CD8-positive, alpha-beta memory T cell (primary cell): ENCODE measurements at regions of chr15 and their contacts with region 1.

Region 1: GRCh38 chr15:60325905-60326304 is 71.9 kb downstream of the ANXA2 start:
- DNase-seq: no peak
- H3K4me3 ChIP-seq: no peak overlapping the region
- H3K4me3 Mint-ChIP-seq: no peak overlapping the region
- H3K27ac ChIP-seq: no peak overlapping the region
- H3K27ac Mint-ChIP-seq: no peak overlapping the region
- H3K4me1 ChIP-seq: no peaks in the 10 kb centered on the region
- H3K4me1 Mint-ChIP-seq: peaks cover 0 to 3% (median 0%) of the 10 kb centered on the region in 3 donors
- H3K27me3 ChIP-seq: peaks cover 19% of the 10 kb centered on the region
- H3K27me3 Mint-ChIP-seq: peaks cover 26 to 59% of the 10 kb centered on the region in 2 donors

Region 2: DNA sequence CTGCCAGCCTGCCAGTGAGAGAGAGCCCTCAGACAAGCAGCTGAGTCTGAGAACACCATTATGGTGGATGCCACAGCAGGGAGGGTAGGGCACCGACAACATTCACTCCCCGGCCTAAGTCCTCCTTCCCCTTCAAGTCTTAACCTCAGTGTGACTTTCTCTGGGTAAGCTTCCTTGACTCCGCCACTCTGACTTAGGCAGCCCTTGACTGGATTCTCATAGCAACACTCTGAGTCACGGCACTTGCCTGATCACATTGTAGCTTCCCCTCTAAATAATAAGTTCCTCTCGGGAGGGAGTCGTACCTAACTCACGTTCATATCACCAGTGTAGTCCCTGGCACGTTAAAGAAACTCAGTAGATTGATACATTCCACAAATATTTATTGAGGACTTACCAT is 141.3 kb before region 1 on chr15:
- CTCF ChIA-PET with region 1: no interaction called
- POLR2A ChIA-PET with region 1: no interaction called
- DNase-seq: no peak
- H3K4me3 ChIP-seq: no peak overlapping the region
- H3K4me3 Mint-ChIP-seq: no peak overlapping the region
- H3K27ac ChIP-seq: no peak overlapping the region
- H3K27ac Mint-ChIP-seq: peak overlapping the region in 1 of 8 donors; percentile 3
- H3K4me1 ChIP-seq: no peaks in the 10 kb centered on the region
- H3K4me1 Mint-ChIP-seq: no peaks in the 10 kb centered on the region
- H3K27me3 ChIP-seq: no peaks in the 10 kb centered on the region
- H3K27me3 Mint-ChIP-seq: peaks cover 7 to 47% of the 10 kb centered on the region in 2 donors

Region 3: GRCh38 chr15:60313906-60314305 is 12.0 kb before region 1 on chr15:
- CTCF ChIA-PET with region 1: interaction called, 6 read pairs
- POLR2A ChIA-PET with region 1: interaction called, 10 read pairs
- DNase-seq: no peak
- H3K4me3 ChIP-seq: no peak overlapping the region
- H3K4me3 Mint-ChIP-seq: no peak overlapping the region
- H3K27ac ChIP-seq: no peak overlapping the region
- H3K27ac Mint-ChIP-seq: no peak overlapping the region
- H3K4me1 ChIP-seq: no peaks in the 10 kb centered on the region
- H3K4me1 Mint-ChIP-seq: no peaks in the 10 kb centered on the region
- H3K27me3 ChIP-seq: no peaks in the 10 kb centered on the region
- H3K27me3 Mint-ChIP-seq: peaks cover 14 to 42% of the 10 kb centered on the region in 2 donors